Ascending aorta (tissue), 2 donors: ENCODE measurements at regions of chr15 and their contacts with region 1.

Region 1: DNA sequence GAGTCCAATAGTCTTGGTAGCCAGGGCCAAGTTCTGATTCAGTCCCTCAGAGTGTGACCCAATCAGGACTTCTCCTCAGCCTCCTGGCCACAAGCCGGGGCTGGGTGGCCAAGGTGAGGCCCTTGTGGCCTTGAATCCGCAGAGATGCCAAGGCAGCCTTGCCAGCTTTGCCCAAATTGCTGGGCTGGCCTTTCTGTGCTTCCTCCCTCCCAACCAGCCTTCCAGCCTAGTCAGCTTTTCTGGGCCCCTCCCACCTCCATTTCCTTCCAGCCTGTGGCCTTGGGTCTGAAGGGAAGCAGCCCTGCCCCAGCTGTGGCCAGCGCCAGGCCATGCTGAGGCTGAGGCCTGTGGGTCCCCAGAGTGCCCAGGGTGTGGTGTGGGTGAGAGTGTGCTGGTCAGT is 34.3 kb upstream of the ANKDD1A start:
- DNase-seq: peak; percentile 47 to 87
- H3K4me3 ChIP-seq: no peak overlapping the region
- H3K27ac ChIP-seq: peak overlapping the region; percentile 58 to 60
- H3K4me1 ChIP-seq: peaks cover 0 to 13% of the 10 kb centered on the region in 2 donors
- H3K27me3 ChIP-seq: no peaks in the 10 kb centered on the region
- CTCF ChIP-seq: no peak

Region 2: DNA sequence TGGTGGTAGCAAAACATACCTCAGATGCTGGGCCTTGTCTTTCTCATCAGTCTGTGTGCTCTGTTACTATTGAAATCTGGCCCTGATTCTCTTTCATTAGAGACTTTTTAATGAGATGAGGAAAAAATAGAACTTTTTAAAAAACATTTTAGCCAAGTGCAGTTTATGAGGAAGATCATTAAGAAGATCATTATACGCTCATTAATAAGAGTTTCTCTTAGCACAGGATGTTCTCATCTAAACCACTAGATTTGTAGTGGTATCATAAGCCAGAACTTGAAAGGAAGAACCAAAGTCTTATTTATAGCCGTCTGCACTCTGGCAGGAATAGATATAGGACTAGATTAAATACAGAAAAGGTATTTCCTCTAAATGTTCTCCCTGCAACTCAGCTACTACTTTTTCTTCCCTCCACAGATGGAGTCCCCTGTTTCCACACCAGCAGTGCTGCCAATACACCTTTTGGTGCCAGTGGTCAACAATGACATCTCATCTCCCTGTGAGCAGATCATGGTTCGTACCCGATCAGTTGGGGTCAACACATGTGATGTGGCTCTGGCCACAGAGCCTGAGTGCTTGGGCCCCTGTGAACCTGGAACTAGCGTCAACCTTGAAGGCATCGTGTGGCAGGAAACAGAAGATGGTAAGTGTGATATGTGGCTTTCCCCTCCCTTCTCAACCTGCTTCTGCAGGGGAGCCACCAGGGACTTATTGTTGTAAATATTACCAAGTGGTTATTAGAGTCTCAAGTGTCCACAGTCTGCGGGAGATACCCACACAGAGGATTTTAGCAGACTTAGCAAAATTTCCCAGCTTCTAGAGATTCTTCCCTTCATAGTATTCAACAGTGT is 254.8 kb before region 1 on chr15:
- intact Hi-C with region 1: no loop called
- DNase-seq: no peak
- H3K4me3 ChIP-seq: no peak overlapping the region
- H3K27ac ChIP-seq: no peak overlapping the region
- H3K4me1 ChIP-seq: peaks cover 2 to 11% of the 10 kb centered on the region in 2 donors
- H3K27me3 ChIP-seq: no peaks in the 10 kb centered on the region
- CTCF ChIP-seq: no peak

Region 3: GRCh38 chr15:64856429-64857145 is 20.8 kb before region 1 on chr15:
- intact Hi-C with region 1: loop called (anchors 2 kb)
- DNase-seq: peak in 1 of 2 donors; percentile 79
- H3K4me3 ChIP-seq: no peak overlapping the region
- H3K27ac ChIP-seq: peak overlapping the region; percentile 76 to 81
- H3K4me1 ChIP-seq: peaks cover 11 to 27% of the 10 kb centered on the region in 2 donors
- H3K27me3 ChIP-seq: no peaks in the 10 kb centered on the region
- CTCF ChIP-seq: no peak

Region 4: GRCh38 chr15:64893481-64894394 is 16.3 kb after region 1 on chr15:
- intact Hi-C with region 1: loop called (anchors 2 kb)
- DNase-seq: peak; percentile 88 to 96
- H3K4me3 ChIP-seq: peak overlapping the region; percentile 35 to 54
- H3K27ac ChIP-seq: peak overlapping the region; percentile 78 to 80
- H3K4me1 ChIP-seq: peaks cover 7 to 28% of the 10 kb centered on the region in 2 donors
- H3K27me3 ChIP-seq: no peaks in the 10 kb centered on the region
- CTCF ChIP-seq: no peak